ENCODE measurements at regions of chr19 and their contacts with region 1.

Region 1: DNA sequence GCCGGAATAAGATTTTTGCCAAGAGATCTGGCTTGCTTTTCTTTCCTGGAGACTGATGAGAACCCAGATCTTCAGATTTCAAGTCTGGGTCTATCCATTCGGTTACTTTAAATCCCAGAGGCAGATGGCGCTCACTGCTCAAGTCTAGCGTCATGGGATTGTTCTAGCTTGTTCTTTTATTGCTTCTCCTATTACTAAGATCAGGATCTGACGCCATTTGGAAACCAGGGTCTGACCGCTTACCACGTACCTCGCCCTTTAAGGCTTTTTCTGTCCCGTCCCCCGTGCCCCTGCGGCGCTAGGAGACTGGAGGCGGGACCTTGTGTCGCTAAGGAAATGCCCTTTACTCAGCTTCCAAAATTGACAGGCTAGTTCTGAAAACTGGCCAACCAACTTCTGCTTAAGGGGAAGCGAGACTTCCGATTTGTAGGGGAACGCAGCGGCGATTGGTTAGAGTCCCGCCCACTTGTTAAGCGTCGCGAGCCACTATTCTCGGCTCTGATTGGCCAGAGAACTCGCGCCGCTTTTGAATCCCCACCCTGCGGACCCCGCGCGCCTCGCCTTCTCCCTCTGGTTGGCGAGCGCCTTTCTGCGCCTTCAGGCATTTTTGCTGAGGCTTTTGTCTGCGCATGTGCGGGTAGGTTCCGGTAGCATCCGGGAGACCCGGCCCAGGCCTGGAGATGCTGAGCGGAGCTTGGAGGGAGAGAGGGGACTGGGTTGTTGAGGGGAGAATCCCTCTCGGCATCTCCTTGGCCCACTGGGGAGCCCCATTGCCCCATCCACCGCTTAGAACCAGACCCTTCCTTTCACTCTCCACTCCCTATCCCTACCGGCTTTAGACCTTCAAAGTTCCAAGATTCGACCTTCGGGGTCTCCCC is 3.8 kb upstream of the C19orf84 start:
- DNase-seq: peak; percentile 99 to 100
- ATAC-seq: peak; percentile 97 to 98
- H3K4me3 ChIP-seq: peak overlapping the region; percentile 55
- H3K27ac ChIP-seq: peak overlapping the region; percentile 76 to 88
- H3K4me1 ChIP-seq: peaks cover 10% of the 10 kb centered on the region
- CTCF ChIP-seq: no peak
- EP300 ChIP-seq: no peak
- POLR2A ChIP-seq: peak; percentile 59
- RAD21 ChIP-seq: peak in 1 of 2 experiments; percentile 10; a peak in 1 of 5 replicates

Region 2: GRCh38 chr19:51194527-51195317 is 199.5 kb before region 1 on chr19:
- CTCF ChIA-PET with region 1: no interaction called
- POLR2A ChIA-PET with region 1: no interaction called
- DNase-seq: no peak
- ATAC-seq: peak; percentile 72 to 76; a peak in 5 of 6 replicates
- H3K4me3 ChIP-seq: no peak overlapping the region
- H3K27ac ChIP-seq: no peak overlapping the region
- H3K4me1 ChIP-seq: peaks cover 7% of the 10 kb centered on the region
- CTCF ChIP-seq: no peak
- EP300 ChIP-seq: no peak
- POLR2A ChIP-seq: no peak
- RAD21 ChIP-seq: peak in 1 of 2 experiments; percentile 11; a peak in 1 of 5 replicates

Region 3: DNA sequence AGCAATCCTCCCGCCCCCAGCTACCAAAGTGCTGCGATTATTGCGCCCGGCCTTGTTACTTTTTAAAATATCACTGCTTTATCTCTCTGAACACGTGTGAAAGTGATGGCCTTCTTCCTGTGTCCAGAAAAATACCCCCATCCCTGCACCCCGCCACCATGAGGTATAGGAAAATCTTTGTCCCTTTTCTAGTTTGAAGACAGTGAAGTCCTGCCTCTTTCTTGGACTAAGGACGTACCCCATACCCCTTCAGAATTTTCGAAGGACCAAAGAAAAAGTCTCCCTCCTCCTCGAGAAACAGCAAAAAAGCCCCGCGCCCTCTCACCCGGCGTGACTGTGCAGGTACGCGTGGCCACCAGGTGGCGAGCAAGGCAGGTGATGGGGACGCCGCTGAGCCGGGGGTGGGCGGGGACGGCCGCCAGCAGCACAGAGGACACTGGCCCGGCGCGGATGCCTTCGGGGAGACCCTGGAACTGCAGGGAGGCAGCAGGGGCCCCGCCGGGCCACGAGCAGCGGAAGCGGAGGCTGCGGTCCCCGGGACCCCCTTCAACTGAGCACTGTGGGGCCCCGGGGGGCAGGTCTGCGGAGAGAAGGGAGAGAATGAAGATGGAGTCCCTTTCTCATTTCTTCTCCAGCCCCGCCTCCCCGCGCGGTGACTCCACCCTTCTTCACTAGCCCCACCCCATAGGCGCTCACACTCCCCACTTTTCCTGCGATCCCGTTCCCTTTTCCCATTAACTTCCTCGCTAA is 55.5 kb before region 1 on chr19:
- CTCF ChIA-PET with region 1: interaction called, 8 read pairs
- POLR2A ChIA-PET with region 1: interaction called, 19 read pairs
- DNase-seq: peak; percentile 88 to 91
- ATAC-seq: peak; percentile 79 to 88
- H3K4me3 ChIP-seq: peak overlapping the region; percentile 64
- H3K27ac ChIP-seq: peak overlapping the region; percentile 84 to 90
- H3K4me1 ChIP-seq: peaks cover 32% of the 10 kb centered on the region
- CTCF ChIP-seq: peak; percentile 97
- EP300 ChIP-seq: no peak
- POLR2A ChIP-seq: peak; percentile 25; the same call in 1 of the 2 replicates
- RAD21 ChIP-seq: peak; percentile 80 to 95

Region 4: DNA sequence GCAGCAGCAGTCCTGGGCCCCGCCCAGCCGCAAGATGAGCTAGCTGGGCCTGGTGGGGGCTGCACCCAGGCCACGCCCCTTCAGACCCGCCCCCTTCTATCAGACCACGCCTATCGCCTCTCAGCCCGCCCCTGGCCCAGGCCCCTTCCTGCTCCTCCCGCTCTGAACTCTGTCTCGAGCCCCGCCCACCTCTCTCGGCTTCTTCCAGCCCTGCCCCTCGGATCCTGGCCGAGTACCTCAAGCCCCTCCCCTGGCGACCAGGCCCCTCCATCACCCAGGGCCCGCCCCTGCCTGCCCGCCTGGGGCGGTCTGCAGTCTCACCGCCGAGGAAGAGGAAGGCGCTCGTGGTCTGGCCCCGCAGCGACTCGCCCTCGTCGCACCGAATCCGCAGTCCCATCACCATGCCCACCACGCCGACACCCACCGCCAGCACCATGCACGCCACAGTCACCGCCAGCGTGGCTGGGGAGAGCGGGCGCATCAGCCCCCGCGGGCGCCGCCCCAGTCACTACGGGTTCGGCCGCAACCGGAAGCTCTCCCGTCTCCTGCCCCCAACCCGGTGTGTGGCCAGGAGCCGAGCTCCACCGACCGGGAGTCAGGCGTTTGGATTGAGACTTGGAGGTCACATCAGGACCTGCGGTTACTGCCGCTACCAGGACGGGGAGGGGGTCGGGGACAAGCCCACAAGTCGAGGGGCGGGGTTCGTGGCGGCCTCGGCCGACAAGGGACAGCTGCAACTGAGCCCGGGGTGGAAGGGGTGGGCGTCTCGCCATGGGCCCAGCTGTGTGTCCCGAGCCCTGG is 26.4 kb before region 1 on chr19:
- CTCF ChIA-PET with region 1: interaction called, 5 read pairs
- POLR2A ChIA-PET with region 1: interaction called, 14 read pairs
- DNase-seq: peak; percentile 93 to 99
- ATAC-seq: peak; percentile 57 to 82
- H3K4me3 ChIP-seq: peak overlapping the region; percentile 61
- H3K27ac ChIP-seq: peak overlapping the region; percentile 96 to 97
- H3K4me1 ChIP-seq: peaks cover 33% of the 10 kb centered on the region
- CTCF ChIP-seq: no peak
- EP300 ChIP-seq: no peak
- POLR2A ChIP-seq: peak; percentile 92
- RAD21 ChIP-seq: peak in 1 of 2 experiments; percentile 18; a peak in 1 of 5 replicates

Region 5: DNA sequence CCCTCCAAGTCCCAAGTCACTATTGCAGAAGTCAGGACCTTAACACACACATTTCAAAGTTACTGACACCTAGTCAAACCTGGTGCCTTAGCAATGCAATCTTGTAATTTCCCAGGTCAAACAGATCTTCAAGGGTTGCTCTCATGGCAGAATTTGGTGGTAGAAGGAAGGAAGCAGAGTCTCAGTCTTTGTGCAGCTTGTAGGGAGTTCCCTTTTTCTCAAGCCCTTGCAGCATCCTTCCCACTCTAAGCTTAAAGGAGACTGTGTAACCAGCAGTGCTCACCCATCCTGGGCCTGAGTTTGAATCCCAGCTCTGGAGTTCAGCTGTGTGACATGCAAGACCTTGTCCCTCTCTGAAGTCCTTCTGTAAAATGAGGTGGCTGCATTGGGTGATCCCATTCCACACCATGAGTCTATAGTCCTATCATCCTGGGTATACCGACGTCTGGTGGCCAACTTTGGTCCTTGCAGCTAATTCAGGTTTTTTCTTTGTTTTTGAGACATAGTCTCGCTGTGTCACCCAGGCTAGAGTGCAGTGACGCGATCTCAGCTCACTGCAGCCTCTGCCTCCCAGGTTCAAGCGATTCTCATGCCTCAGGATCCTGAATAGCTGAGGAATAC is 13.4 kb after region 1 on chr19:
- CTCF ChIA-PET with region 1: interaction called, 11 read pairs
- POLR2A ChIA-PET with region 1: no interaction called
- DNase-seq: peak; percentile 56 to 72
- ATAC-seq: peak; percentile 82 to 94; a peak in 5 of 6 replicates
- H3K4me3 ChIP-seq: no peak overlapping the region
- H3K27ac ChIP-seq: no peak overlapping the region
- H3K4me1 ChIP-seq: no peaks in the 10 kb centered on the region
- CTCF ChIP-seq: peak; percentile 48; the same call in 2 of the 3 replicates
- EP300 ChIP-seq: no peak
- POLR2A ChIP-seq: no peak
- RAD21 ChIP-seq: peak; percentile 47 to 66; a peak in 4 of 5 replicates

Region 6: DNA sequence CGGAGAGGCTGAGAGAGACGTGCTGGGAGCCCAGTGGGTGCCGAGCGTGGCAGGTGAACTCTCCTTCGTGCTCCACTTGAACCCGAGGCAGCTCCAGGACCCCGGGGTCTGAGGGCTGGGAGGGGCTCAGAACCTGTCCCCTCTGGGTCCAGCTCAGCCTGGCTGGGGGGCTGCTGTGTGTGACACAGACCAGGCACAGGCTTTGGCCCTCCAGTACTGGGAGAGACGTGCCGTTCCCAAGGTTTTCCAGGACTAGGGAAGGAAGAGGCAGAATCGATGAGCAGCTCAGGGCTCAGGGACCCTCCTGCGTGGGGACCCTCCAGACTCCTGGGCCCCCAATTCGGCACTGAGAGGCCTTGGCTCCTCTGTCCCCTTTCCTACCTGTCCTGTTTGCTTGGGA is 21.0 kb after region 1 on chr19:
- CTCF ChIA-PET with region 1: interaction called, 11 read pairs
- POLR2A ChIA-PET with region 1: no interaction called
- DNase-seq: no peak
- ATAC-seq: no peak
- H3K4me3 ChIP-seq: no peak overlapping the region
- H3K27ac ChIP-seq: no peak overlapping the region
- H3K4me1 ChIP-seq: no peaks in the 10 kb centered on the region
- CTCF ChIP-seq: no peak
- EP300 ChIP-seq: no peak
- POLR2A ChIP-seq: no peak
- RAD21 ChIP-seq: no peak

Region 7: GRCh38 chr19:51422053-51422448 is 27.9 kb after region 1 on chr19:
- CTCF ChIA-PET with region 1: interaction called, 16 read pairs
- POLR2A ChIA-PET with region 1: no interaction called
- DNase-seq: peak; percentile 80
- ATAC-seq: peak; percentile 87 to 96
- H3K4me3 ChIP-seq: no peak overlapping the region
- H3K27ac ChIP-seq: no peak overlapping the region
- H3K4me1 ChIP-seq: no peaks in the 10 kb centered on the region
- CTCF ChIP-seq: peak; percentile 83
- EP300 ChIP-seq: no peak
- POLR2A ChIP-seq: no peak
- RAD21 ChIP-seq: peak; percentile 78 to 81

Region 8: DNA sequence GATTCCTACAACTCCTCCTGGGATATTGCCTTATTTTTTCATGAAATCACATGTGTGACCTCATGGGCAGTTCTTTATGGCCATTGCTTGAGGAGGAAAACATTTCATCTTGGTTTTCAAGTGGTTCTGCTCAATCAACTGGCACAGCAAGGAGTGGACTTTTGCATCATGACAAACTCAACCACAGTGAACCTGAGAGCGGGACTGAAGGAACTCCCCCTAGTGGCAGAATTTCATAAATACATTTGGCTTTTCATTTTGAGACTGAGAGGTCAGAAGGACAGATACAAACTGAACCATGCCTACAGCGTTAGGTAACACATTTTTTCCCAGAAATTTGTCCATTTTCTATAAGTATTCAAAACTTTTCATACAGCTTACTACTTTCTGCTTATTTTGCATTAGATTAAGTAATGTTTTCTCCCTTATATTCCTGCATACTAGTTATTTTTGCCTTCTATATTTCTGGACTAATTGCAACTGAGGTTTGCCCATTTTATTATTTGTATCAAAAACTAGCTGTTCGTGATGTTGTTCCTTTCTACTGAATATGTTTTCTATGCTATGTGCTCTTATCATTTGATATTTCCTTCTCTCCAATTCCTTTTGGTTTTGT is 120.8 kb after region 1 on chr19:
- CTCF ChIA-PET with region 1: interaction called, 12 read pairs
- POLR2A ChIA-PET with region 1: no interaction called
- DNase-seq: peak; percentile 48 to 63
- ATAC-seq: peak; percentile 73 to 86
- H3K4me3 ChIP-seq: no peak overlapping the region
- H3K27ac ChIP-seq: no peak overlapping the region
- H3K4me1 ChIP-seq: no peaks in the 10 kb centered on the region
- CTCF ChIP-seq: peak; percentile 64
- EP300 ChIP-seq: no peak
- POLR2A ChIP-seq: no peak
- RAD21 ChIP-seq: peak; percentile 47 to 56